Mammary epithelial cell (primary cell): ENCODE measurements at regions of chr12 and their contacts with region 1.

Region 1: GRCh38 chr12:93229494-93230325 is 148.0 kb upstream of the NUDT4 start:
- DNase-seq: peak; percentile 87
- H3K4me3 ChIP-seq: no peak overlapping the region
- H3K27ac ChIP-seq: peak overlapping the region; percentile 61
- H3K4me1 ChIP-seq: peaks cover 22% of the 10 kb centered on the region
- H3K27me3 ChIP-seq: no peaks in the 10 kb centered on the region
- CTCF ChIP-seq: no peak

Region 2: DNA sequence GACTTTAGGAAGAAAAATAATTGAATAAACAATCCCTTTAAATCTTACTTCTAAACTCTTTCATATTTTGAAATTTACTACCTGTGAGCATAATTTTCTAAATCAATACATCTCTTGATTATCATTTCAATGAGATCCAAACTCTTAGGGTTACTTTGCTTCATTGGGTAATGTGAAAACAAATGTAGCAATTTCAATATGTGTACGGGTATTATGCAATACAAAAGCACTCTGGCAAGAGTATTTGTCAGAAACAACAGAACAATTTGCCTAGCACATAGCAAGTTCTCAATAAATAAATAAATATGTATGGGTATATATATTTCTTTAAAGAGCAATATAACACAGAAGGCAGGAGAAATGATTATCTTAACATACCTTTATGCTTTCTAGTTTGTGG is 449.8 kb before region 1 on chr12:
- CTCF ChIA-PET with region 1: no interaction called
- dilution Hi-C with region 1: no loop called
- in situ Hi-C with region 1: no loop called
- intact Hi-C with region 1: no loop called
- DNase-seq: no peak
- H3K4me3 ChIP-seq: no peak overlapping the region
- H3K27ac ChIP-seq: no peak overlapping the region
- H3K4me1 ChIP-seq: peaks cover 14% of the 10 kb centered on the region
- H3K27me3 ChIP-seq: no peaks in the 10 kb centered on the region
- CTCF ChIP-seq: no peak

Region 3: GRCh38 chr12:93204896-93205295 is 24.8 kb before region 1 on chr12:
- CTCF ChIA-PET with region 1: interaction called, 15 read pairs
- dilution Hi-C with region 1: no loop called
- in situ Hi-C with region 1: no loop called
- intact Hi-C with region 1: no loop called
- DNase-seq: no peak
- H3K4me3 ChIP-seq: no peak overlapping the region
- H3K27ac ChIP-seq: no peak overlapping the region
- H3K4me1 ChIP-seq: no peaks in the 10 kb centered on the region
- H3K27me3 ChIP-seq: no peaks in the 10 kb centered on the region
- CTCF ChIP-seq: no peak

Region 4: DNA sequence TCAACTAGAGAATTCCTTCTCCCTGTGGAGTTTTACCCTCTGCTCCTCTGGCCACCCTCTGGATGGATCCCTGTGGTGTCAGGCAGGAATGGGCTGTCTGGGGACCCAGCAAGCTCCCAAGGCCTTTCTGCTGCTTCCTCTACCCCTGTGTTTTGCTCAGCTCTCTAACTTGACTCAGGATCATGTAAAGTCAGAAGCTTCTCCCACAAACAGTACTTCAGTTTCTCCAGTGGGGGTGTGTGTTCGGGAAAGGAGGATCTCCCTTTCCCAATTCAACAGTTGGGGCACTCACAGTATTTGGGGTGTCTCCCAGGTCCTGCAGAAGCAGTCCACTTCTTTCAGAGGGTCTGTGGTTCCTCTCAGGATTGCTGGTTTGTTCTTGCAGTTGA is 14.4 kb before region 1 on chr12:
- CTCF ChIA-PET with region 1: no interaction called
- dilution Hi-C with region 1: no loop called
- in situ Hi-C with region 1: no loop called
- intact Hi-C with region 1: no loop called
- DNase-seq: no peak
- H3K4me3 ChIP-seq: no peak overlapping the region
- H3K27ac ChIP-seq: no peak overlapping the region
- H3K4me1 ChIP-seq: no peaks in the 10 kb centered on the region
- H3K27me3 ChIP-seq: no peaks in the 10 kb centered on the region
- CTCF ChIP-seq: no peak

Region 5: GRCh38 chr12:93297032-93297431 is 67.3 kb after region 1 on chr12:
- CTCF ChIA-PET with region 1: no interaction called
- dilution Hi-C with region 1: loop called (anchors 5 kb)
- in situ Hi-C with region 1: no loop called
- intact Hi-C with region 1: no loop called
- DNase-seq: no peak
- H3K4me3 ChIP-seq: no peak overlapping the region
- H3K27ac ChIP-seq: no peak overlapping the region
- H3K4me1 ChIP-seq: no peaks in the 10 kb centered on the region
- H3K27me3 ChIP-seq: no peaks in the 10 kb centered on the region
- CTCF ChIP-seq: no peak

Region 6: DNA sequence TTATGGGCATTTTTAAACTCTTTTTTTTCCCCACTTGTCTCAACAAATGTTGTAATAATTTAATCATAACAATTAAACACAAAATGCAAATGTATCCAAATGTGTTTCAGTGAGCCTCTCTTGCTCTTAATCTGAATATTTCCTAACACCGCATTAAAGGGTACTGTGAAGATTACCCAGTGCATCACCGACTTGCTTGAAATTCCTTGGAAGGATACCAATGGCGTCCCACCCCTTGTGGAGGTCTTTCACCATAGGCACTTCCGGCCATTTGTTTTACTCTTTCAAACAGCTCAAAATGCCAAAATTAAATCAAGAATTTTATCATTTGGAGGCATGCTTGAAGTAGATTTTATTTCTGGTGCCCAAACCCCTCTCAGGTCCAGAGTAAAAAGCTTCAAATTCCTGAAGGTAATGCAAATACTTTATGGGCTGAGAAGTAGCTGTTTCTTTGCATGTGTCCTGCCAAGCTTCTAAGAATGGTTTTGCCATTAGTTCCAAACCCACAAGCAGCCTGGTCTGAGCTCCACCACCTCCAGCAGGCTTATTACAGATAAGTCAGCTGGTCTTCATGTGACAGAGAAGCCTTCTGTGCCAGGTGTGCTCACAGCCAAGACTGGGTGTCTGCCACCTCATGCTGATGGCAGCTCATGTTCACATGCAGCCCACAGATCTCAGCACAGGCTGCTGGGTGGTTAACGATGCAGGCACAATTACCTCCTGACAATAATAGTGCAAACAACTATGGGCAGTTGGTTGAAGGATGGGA is 131.6 kb after region 1 on chr12:
- CTCF ChIA-PET with region 1: no interaction called
- dilution Hi-C with region 1: no loop called
- in situ Hi-C with region 1: no loop called
- intact Hi-C with region 1: no loop called
- DNase-seq: peak; percentile 56
- H3K4me3 ChIP-seq: no peak overlapping the region
- H3K27ac ChIP-seq: no peak overlapping the region
- H3K4me1 ChIP-seq: no peaks in the 10 kb centered on the region
- H3K27me3 ChIP-seq: no peaks in the 10 kb centered on the region
- CTCF ChIP-seq: no peak